Mammary epithelial cell (primary cell): ENCODE measurements at regions of chr9 and their contacts with region 1.

Region 1: DNA sequence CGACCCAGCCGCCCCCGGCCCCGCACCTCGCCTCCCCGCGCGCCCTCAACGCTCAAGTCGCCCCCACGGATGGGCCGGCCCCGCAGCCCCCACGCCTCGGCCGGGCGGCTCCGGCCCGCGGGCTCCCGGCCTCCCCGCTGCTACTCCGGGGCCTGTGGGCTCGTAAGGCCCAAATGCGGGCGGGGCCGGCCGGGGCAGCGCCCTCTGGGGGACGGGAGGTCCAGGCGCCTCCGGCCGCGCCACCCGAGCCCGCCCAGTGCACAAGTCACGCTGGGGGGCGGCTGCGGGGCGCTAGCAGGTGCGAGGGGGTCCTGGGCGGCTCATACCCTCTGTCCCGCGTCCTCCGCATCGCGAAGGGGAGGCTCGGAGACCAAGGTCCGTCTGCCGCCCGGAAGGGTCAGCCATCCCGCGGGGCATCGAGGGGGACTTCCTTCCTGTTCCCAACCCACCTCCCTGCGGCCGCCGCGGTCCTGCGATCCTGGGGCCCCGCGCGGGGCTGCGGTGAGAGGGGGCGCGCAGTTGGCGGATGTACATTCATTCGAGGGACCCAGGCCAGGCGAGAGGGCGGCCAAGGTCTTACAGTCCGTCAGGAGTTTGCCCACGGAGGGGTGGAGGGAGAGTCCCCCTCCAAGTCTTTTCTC is at the start of gene CIZ1:
- DNase-seq: peak; percentile 63
- H3K4me3 ChIP-seq: peak within 1 kb of the TSS; percentile 84 to 90 (median 88)
- H3K27ac ChIP-seq: peak within 1 kb of the TSS; percentile 26
- H3K4me1 ChIP-seq: peaks cover 19% of the 10 kb centered on the region
- H3K27me3 ChIP-seq: no peaks in the 10 kb centered on the region
- CTCF ChIP-seq: peak; percentile 41 to 72
- total RNA-seq, gene CIZ1: 36.0 to 109 TPM

Region 2: DNA sequence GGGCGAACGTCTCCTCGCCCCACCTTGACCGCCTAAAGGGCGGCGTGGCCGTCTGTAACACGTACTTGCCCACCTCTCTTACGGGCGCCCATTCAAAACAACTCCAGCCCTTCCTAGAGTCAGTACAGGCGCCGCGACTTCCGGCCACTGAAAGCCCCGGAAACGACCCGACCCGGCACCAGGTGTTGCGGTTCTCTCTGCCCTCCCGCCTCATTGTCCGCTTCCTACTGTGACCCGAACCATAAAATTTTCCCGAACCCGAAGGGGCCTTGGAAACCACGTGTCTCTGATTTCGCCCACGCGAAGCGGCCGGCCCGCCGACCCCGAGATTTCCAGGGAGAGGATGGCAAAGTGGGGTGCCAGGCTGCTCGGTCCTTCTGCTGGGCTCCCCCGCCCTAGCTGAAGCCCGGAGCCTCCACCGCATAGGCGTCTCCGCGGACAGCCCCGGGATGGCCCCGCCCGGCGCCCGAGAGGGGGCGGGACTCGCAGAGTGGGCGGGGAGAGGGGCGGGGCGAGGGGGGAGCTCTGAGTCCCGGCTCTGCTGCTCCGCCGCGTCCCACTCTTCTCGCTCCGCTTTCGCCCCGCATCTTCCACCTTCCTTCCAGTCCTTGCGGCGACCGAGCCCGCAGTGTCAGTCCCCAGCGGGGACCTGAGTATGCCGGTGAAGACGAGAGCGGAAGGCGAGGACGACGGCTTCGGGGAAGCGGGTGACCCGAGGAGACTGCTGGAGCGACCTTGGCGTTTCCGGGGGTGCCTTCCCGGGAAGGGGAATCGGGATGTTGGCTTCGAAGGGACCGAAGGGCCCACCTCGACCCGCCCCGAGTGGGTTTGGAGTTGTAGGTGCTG is 63.3 kb before region 1 on chr9:
- CTCF ChIA-PET with region 1: interaction called, 7 read pairs
- dilution Hi-C with region 1: no loop called
- in situ Hi-C with region 1: no loop called
- intact Hi-C with region 1: loop called (anchors 2 kb)
- DNase-seq: peak; percentile 91
- H3K4me3 ChIP-seq: peak overlapping the region; percentile 64 to 100 (median 91)
- H3K27ac ChIP-seq: peak overlapping the region; percentile 90
- H3K4me1 ChIP-seq: peaks cover 15% of the 10 kb centered on the region
- H3K27me3 ChIP-seq: no peaks in the 10 kb centered on the region
- CTCF ChIP-seq: no peak

Region 3: DNA sequence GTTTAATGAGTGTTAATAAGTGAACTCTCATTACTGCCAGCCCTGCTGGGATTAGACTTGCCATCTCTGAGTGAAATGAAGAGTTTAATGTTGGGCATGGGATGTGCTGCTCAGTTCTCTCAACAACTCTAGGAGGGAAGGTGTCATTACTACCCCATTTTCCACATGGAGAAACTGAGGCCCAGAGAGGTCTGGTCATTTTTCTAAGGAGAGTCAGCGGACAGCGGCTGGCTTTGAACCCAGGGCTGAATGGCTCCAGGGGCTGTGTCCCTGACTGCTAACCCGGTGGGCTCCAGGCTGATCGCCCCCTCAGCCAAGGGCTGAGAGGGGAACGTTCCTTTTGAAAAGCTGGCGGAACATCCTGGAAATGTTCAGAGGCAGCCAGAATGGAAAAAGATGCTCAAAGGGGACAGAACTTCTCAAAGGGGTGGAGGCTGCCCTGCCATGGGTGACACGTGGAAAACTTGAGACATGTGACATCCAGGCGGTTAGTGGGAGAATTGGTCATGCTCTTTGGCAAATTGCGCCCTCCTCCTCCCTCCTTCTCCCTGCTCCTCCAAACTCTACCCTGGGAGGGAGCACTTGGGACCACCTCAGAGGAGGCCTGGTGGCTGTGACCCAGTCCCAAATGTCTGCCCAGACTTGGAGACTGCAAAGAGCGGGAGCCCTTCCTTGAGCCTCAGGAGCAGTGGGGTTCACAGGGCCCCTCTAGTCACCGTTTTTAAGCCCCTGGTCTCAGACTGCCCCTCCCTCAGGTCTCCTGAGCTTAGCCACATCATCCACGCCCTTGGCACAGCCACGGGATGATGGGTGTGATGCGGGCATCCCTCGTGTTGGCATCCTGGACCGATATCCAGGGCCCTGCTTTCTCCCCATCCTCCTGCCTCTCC is 40.4 kb after region 1 on chr9:
- CTCF ChIA-PET with region 1: no interaction called
- dilution Hi-C with region 1: no loop called
- in situ Hi-C with region 1: no loop called
- intact Hi-C with region 1: no loop called
- DNase-seq: no peak
- H3K4me3 ChIP-seq: no peak overlapping the region
- H3K27ac ChIP-seq: no peak overlapping the region
- H3K4me1 ChIP-seq: no peaks in the 10 kb centered on the region
- H3K27me3 ChIP-seq: no peaks in the 10 kb centered on the region
- CTCF ChIP-seq: no peak